Thyroid gland (tissue), 4 donors: ENCODE measurements at regions of chr3 and their contacts with region 1.

Region 1: DNA sequence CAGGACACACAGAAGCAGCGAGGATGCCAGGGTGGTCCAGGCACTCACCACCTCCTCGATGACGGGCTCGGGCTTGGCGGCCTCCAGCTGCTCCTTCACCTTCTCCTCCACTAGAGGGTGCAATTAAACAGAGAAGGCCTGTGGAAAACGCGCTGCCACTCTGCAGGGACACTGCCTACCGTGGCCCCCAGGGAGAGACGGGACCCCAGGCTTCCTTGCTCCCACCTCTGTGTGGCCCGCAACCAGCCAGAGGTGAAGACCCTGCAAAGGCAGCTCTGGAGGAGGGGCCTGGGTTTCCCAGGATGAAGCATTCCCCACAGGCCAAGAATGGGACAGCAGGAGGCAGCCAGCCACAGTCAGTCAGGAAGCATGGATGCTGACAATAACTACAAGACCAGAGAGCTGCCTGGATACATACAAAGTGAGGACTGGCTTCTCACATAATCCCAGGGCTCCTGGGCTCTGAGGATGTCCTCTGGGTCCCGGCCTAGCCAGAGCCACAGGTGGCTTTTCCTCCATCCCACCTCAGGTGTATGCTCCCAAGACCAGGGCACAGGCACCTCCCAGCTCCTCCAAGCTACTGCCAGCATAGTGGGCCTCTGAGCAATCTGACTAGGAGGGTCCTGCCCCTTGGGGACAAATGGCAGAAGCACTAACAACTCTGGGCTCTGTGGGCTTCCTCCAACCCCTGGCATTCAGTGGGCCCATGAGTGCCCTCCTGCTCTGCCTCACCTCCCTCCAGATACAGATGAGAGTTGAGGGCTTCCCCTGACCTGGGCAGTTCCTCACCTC is 46.2 kb downstream of the PTH1R start:
- DNase-seq: no peak
- H3K4me3 ChIP-seq: no peak overlapping the region
- H3K27ac ChIP-seq: peak overlapping the region in 1 of 3 donors; percentile 3
- H3K4me1 ChIP-seq: peaks cover 35 to 39% of the 10 kb centered on the region in 2 donors
- H3K27me3 ChIP-seq: no peaks in the 10 kb centered on the region
- CTCF ChIP-seq: peak; percentile 15 to 74 (median 54)
- POLR2A ChIP-seq: no peak

Region 2: GRCh38 chr3:46965151-46965550 is 41.4 kb after region 1 on chr3:
- intact Hi-C with region 1: loop called (anchors 5 kb)
- DNase-seq: peak; percentile 79 to 82
- H3K4me3 ChIP-seq: no peak overlapping the region
- H3K27ac ChIP-seq: peak overlapping the region; percentile 74 to 87 (median 78)
- H3K4me1 ChIP-seq: peaks cover 71 to 85% of the 10 kb centered on the region in 2 donors
- H3K27me3 ChIP-seq: no peaks in the 10 kb centered on the region
- CTCF ChIP-seq: no peak
- POLR2A ChIP-seq: peak in 1 of 2 donors; percentile 41

Region 3: GRCh38 chr3:46998121-46998851 is 74.5 kb after region 1 on chr3:
- intact Hi-C with region 1: loop called (anchors 5 kb)
- DNase-seq: peak; percentile 79 to 82
- H3K4me3 ChIP-seq: no peak overlapping the region
- H3K27ac ChIP-seq: no peak overlapping the region
- H3K4me1 ChIP-seq: no peaks in the 10 kb centered on the region
- H3K27me3 ChIP-seq: no peaks in the 10 kb centered on the region
- CTCF ChIP-seq: peak; percentile 35 to 87 (median 82)
- POLR2A ChIP-seq: no peak